A549 (cell line): ENCODE measurements at regions of chr9 and their contacts with region 1.

Region 1: DNA sequence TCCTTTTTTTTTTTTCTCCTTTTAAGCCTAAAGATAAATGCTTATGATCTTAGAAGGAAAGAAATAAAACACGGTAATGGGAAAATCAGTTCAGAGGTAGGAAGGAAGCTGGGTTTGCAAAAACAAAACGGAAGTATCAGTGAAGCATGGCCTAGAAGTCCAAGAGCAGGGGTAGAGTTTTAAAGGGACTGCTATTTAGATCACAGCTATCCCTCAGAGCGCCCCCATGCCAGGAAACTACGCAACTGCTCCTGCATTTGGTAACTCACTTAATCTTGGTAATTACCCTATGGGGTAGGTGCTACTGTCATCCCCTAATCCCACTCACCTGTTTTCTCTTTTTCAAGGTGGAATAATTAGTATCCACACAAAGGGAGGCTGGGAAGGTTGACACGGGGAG is 16.0 kb downstream of the TLE1 start:
- DNase-seq: no peak
- ATAC-seq: peak; percentile 12 to 44; a peak in 2 of 6 replicates
- H3K4me3 ChIP-seq: no peak overlapping the region
- H3K27ac ChIP-seq: no peak overlapping the region
- H3K4me1 ChIP-seq: peaks cover 16% of the 10 kb centered on the region
- CTCF ChIP-seq: no peak
- EP300 ChIP-seq: no peak
- POLR2A ChIP-seq: no peak
- RAD21 ChIP-seq: no peak

Region 2: GRCh38 chr9:81601639-81602628 is 71.4 kb before region 1 on chr9:
- CTCF ChIA-PET with region 1: no interaction called
- POLR2A ChIA-PET with region 1: interaction called, 10 read pairs
- DNase-seq: peak in 1 of 2 experiments; percentile 38
- ATAC-seq: peak; percentile 39 to 40; a peak in 4 of 6 replicates
- H3K4me3 ChIP-seq: no peak overlapping the region
- H3K27ac ChIP-seq: peak overlapping the region; percentile 57 to 71
- H3K4me1 ChIP-seq: peaks cover 52% of the 10 kb centered on the region
- CTCF ChIP-seq: no peak
- EP300 ChIP-seq: no peak
- POLR2A ChIP-seq: no peak
- RAD21 ChIP-seq: no peak

Region 3: DNA sequence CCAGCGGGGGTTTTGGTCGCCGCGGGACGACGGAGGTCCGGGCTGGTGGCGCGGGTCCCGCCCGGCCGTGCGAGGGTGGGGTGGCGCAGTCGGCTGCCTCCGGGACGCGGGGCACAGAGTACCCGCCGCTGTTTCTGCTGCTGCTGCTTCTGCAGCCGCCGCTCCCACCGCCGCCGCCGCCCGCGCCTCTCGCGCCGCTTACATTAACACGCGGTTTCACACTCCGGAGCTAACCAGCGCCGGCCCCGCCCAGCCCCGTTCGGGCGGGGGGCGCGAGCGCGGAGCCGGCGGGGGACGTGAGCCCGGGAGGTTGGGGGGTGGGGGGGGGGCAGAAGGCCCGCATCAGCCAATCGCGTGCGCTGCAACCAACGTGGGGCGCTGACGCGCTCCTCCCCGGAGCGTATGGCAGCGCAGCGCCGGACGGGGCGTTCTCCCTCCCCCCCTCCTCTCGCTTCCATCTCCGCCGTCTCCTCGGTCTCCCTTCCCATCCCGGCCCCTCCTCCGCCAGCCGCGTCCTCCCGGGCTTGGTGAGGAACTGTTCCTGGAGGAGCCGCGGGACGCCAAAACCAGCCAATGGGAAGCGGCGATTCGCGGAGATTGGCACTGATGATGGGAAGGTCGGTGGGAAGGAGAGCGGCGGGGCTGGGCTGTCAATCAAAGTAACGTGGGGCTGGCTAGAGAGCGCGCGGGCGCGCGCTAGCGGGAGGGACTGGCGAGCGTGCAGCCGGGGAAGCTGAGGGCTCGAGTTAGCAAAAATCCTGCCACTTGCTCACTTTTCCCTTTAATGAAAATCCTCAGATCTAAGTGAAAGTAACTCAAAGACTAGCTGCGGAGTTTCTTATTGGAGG is 16.3 kb after region 1 on chr9 and contains the start of gene TLE1:
- CTCF ChIA-PET with region 1: interaction called, 12 read pairs
- POLR2A ChIA-PET with region 1: no interaction called
- DNase-seq: peak; percentile 99
- ATAC-seq: peak; percentile 83 to 89
- H3K4me3 ChIP-seq: peak within 1 kb of the TSS; percentile 88
- H3K27ac ChIP-seq: peak within 1 kb of the TSS; percentile 94 to 99
- H3K4me1 ChIP-seq: peaks cover 26% of the 10 kb centered on the region
- CTCF ChIP-seq: no peak
- EP300 ChIP-seq: peak in 1 of 2 experiments; percentile 62; a peak in 1 of 5 replicates
- POLR2A ChIP-seq: peak; percentile 83
- RAD21 ChIP-seq: 0 out of 5 replicates have a peak, but pooled peaks of 1 of the 2 experiments have one; percentile 7
- polyA plus RNA-seq, gene TLE1: 100 and 117 TPM in 2 replicates